Tibial artery (tissue), 4 donors: ENCODE measurements at regions of chr15 and their contacts with region 1.

Region 1: DNA sequence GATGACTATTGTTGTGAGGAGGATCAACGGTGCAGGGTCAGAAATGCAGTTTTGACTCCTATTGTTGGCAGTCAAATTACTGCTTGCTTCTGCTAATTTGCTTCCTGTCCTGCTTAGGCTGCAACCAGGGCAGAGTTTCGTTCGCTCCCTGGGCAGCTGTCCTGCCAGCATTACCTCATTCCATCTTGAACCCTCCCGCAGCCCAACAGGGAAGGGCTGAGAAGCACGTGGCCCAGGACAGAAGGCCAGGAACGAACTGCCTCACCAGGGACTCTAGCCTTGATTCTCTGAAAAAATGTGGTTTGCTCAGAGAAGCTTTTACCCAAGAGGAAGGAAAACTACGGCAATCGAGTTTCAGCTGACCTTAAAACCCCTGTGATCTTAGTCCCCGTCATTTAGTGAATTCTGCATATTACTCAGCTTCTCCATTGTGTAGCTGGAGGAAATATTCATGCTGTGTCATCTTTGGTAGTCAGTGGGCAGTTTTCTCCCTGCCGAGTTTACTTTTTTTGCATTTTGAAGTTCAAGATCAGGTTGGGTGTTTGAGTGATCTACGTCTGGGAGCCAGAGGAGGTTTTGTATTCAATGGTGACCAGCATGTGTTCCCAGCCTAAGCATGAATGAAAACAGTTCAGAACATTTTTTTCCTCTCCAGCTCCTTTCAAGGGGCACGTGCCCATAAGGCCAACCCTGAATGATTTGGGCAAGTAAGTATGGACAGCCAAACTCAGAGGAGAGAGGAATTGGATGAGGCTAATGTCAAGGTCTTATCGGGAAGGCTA is 23.0 kb downstream of the TLNRD1 start:
- DNase-seq: peak; percentile 89
- H3K4me3 ChIP-seq: no peak overlapping the region
- H3K27ac ChIP-seq: peak overlapping the region in 1 of 2 donors; percentile 34
- H3K4me1 ChIP-seq: peaks cover 0 to 4% (median 0%) of the 10 kb centered on the region in 4 donors
- H3K27me3 ChIP-seq: no peaks in the 10 kb centered on the region
- CTCF ChIP-seq: no peak

Region 2: GRCh38 chr15:81087066-81087465 is 63.4 kb after region 1 on chr15:
- intact Hi-C with region 1: loop called (anchors 10 kb)
- DNase-seq: no peak
- H3K4me3 ChIP-seq: no peak overlapping the region
- H3K27ac ChIP-seq: no peak overlapping the region
- H3K4me1 ChIP-seq: peaks cover 0 to 2% (median 0%) of the 10 kb centered on the region in 4 donors
- H3K27me3 ChIP-seq: no peaks in the 10 kb centered on the region
- CTCF ChIP-seq: no peak